Calu3 (cell line): ENCODE measurements at regions of chr4 and their contacts with region 1.

Region 1: DNA sequence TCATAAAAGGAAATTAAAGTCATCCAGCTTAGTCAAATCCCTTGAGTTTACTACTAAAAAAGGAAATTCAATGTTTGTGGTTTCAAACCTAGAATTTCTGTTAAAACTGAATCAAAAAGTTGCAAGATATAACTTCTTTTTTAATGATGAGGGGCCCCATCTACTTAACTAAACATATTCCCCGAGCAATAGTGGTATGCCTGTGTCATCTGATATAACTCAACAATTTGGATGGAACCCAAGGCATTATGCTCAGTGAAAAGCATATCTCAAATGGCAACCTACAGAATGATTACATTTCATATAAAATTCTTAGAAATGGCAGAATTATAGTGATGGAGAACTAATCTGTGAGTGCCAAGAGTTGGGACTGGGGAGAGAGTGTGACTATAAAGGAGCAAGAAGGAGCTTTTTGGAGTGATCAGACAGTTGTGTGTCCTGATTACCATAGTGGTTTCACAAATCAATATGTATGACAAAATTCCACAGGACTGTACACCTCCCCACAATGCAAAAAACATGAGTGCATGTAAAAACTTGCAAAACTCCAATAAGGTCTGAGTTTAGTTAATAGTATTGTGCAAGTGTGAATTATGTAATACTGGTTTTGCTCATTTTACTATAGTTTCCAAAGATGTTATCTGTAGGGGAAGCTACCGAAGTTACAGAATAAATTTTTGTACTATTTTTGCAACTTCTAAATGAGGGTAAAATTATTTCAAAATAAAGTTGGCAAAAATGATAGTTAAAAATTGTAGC is 323.2 kb downstream of the ARHGAP24 start:
- DNase-seq: no peak
- H3K4me3 Mint-ChIP-seq: no peak overlapping the region
- H3K27ac Mint-ChIP-seq: no peak overlapping the region
- H3K4me1 Mint-ChIP-seq: peaks cover 8% of the 10 kb centered on the region
- H3K27me3 Mint-ChIP-seq: no peaks in the 10 kb centered on the region
- CTCF ChIP-seq: no peak

Region 2: DNA sequence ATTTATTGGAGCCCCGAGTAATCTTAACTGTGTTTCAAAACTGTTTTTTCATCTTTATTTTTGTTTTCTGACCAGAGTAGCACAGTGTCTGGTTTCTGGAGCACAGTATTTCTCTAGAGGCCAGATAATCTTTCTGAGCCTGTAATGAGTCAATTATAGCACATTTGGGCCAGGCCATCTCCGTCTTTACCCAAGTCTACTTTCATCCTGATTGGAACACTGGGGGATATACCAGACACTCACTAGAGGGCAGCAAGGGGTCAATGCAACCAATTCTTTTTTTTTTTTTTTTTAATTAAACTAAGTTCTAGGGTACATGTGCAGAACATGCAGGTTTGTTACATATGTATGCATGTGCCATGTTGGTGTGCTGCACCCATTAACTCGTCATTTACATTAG is 41.3 kb before region 1 on chr4:
- CTCF ChIA-PET with region 1: no interaction called
- intact Hi-C with region 1: loop called (anchors 2 kb)
- DNase-seq: peak; percentile 28
- H3K4me3 Mint-ChIP-seq: no peak overlapping the region
- H3K27ac Mint-ChIP-seq: no peak overlapping the region
- H3K4me1 Mint-ChIP-seq: no peaks in the 10 kb centered on the region
- H3K27me3 Mint-ChIP-seq: no peaks in the 10 kb centered on the region
- CTCF ChIP-seq: no peak

Region 3: DNA sequence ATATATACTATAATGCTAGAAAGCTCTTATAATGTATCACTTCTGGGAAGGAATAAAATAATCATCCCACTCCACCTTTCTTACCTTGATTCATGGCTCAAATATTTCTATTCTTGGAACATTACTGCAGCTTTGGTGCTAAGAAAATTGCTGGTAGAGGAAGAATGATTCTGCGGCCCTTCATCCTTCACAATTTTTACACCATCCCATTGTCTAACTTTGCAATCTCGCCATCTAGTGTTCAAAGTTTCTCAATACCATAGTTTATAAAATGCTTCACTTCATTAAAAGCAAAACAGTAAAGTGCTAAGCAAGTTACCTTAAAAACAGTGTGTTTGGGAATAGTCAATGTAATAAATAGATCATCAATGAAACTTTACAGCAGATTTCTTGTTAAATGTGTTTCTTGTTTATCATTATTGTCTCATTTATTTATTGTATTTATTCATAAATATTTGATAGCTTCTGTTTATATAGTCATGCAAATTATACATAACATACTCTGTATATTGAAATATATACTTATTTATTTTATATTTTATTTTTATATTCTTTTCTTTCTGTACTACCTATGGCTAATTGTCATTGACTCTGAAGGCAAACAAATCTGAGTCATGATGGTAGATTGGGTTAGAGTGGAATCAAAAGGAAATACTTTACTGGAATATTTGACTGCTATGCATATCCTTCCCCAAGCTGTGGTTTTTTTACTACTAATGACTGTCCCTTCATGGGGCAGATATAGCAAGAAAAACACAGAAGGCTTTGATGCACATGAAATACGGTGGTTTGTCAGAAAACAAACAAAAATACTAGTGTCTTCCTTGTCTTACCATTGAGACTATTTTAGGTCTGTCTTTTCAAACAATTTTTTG is 171.0 kb after region 1 on chr4:
- CTCF ChIA-PET with region 1: interaction called, 47 read pairs
- intact Hi-C with region 1: loop called (anchors 1 kb)
- DNase-seq: no peak
- H3K4me3 Mint-ChIP-seq: no peak overlapping the region
- H3K27ac Mint-ChIP-seq: no peak overlapping the region
- H3K4me1 Mint-ChIP-seq: peaks cover 6% of the 10 kb centered on the region
- H3K27me3 Mint-ChIP-seq: no peaks in the 10 kb centered on the region
- CTCF ChIP-seq: no peak

Region 4: DNA sequence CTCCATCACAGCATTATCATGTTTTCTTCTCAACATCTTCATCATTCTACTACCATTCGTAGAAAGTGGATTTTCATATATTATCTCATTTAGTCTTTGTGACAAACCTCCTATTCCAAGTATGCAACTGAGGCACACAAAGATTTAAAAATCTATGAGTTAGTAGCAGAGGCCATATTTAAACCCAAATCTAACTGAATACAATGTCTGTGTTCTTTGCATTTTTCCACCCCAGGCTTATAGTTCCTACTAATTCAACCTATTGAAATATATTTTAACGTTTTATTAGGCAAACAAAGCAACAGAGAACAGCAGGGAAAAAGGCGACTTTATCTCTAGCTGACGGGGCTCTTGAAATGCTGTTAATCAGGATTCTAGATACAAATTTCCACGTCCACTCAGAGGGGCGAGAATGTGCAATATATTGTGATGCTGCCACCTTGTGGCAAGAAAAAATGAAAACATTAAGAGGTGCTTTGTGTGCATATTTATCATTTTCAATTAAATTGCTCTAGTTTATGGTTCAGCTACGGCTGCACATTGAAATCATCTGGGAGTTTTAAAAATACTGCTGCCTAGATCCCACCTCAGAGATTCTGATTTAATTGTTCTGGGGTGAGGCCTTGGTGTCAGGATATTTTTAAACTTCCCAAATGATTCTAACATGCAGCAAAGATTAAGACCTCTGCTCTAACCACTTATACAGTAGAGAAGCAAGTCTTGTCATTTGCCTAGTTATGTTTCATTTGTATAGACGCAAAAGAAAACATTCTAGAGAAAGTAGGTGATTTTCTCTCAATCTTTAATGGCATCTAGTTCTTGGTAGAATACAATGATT is 245.8 kb after region 1 on chr4:
- CTCF ChIA-PET with region 1: no interaction called
- intact Hi-C with region 1: loop called (anchors 1 kb)
- DNase-seq: peak; percentile 48
- H3K4me3 Mint-ChIP-seq: no peak overlapping the region
- H3K27ac Mint-ChIP-seq: no peak overlapping the region
- H3K4me1 Mint-ChIP-seq: peaks cover 13% of the 10 kb centered on the region
- H3K27me3 Mint-ChIP-seq: no peaks in the 10 kb centered on the region
- CTCF ChIP-seq: peak; percentile 22